B cell (primary cell): ENCODE measurements at regions of chr10 and their contacts with region 1.

Region 1: DNA sequence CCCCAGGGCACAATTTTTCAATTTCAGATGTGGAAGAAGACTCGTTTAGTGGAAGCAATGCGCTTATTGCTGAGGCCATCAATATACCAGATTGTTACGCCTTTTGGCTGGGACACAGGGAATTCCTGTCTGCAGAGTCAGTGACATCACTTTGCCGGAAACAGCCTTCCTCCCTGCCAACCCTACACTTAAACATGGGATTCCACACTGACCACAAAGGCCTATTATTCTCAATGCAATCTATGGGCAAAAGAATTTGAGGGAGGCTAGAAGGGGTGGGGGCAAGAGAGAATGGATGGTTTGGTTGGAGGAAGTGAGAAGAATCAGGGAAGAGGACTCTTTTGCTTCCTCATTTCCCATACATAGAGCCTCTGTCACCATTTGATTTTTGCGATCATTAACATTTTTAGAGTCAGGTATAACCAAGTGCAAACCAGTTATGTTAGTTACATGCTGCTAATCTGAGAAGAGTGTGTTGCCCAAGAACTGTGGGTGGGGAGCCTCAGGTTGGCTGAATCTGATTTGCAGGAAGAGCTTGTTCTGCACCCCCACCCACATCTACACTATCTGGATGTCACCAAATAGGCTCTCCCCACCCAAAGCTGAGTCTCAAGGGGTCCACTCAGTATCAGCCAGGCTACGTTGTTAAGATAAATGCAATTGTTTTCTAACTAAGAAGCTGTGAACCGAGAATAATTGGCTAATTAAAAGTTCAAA is 58.2 kb downstream of the ENTPD1 start:
- DNase-seq: no peak
- ATAC-seq: peak; percentile 45
- H3K4me3 ChIP-seq: no peak overlapping the region
- H3K4me3 Mint-ChIP-seq: peak overlapping the region; percentile 52
- H3K27ac ChIP-seq: no peak overlapping the region
- H3K27ac Mint-ChIP-seq: peak overlapping the region; percentile 28
- H3K4me1 ChIP-seq: peaks cover 27 to 46% of the 10 kb centered on the region in 2 donors
- H3K4me1 Mint-ChIP-seq: peaks cover 67% of the 10 kb centered on the region
- H3K27me3 ChIP-seq: no peaks in the 10 kb centered on the region
- H3K27me3 Mint-ChIP-seq: no peaks in the 10 kb centered on the region
- CTCF ChIP-seq: no peak

Region 2: DNA sequence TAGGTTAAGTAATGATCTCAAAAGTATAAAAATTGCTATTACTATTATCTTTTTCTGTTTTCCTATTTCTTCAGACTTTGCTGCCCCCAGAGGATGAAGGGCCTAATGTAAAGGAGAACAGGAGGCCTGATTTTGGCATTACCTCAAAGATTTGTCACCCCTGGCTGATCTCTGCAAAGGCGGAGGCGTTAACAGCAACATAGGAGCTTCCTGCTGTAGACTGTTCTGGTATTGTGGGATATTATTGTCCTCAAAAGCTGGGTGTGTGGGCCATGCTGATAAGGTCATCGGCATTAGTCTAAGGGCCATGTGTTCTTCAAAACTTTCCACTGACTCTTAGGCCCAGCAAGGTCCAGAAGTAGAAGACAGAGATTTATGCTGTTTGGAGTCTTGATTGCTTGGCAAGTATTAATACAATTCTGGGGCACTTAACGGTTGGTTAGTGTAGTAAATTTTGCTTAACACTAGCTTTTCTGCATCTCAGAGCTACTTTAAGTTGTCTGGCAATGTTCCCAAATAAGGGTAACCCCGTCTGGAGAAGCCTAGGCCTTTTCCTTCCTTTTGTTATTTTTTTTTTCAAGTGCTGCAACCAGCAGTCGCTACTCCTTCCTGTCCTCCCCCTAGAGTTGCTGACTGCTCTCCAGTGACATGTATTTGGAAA is 72.2 kb before region 1 on chr10:
- CTCF ChIA-PET with region 1: interaction called, 33 read pairs
- POLR2A ChIA-PET with region 1: no interaction called
- intact Hi-C with region 1: no loop called
- DNase-seq: peak; percentile 79
- ATAC-seq: peak; percentile 84
- H3K4me3 ChIP-seq: peak overlapping the region; percentile 7 to 63 (median 49)
- H3K4me3 Mint-ChIP-seq: peak overlapping the region; percentile 90
- H3K27ac ChIP-seq: peak overlapping the region; percentile 76 to 78
- H3K27ac Mint-ChIP-seq: peak overlapping the region; percentile 98
- H3K4me1 ChIP-seq: peaks cover 44 to 48% of the 10 kb centered on the region in 2 donors
- H3K4me1 Mint-ChIP-seq: peaks cover 55% of the 10 kb centered on the region
- H3K27me3 ChIP-seq: no peaks in the 10 kb centered on the region
- H3K27me3 Mint-ChIP-seq: no peaks in the 10 kb centered on the region
- CTCF ChIP-seq: peak; percentile 66

Region 3: GRCh38 chr10:95792874-95793285 is 21.3 kb before region 1 on chr10:
- CTCF ChIA-PET with region 1: interaction called, 4 read pairs
- POLR2A ChIA-PET with region 1: no interaction called
- intact Hi-C with region 1: loop called (anchors 2 kb)
- DNase-seq: peak; percentile 43
- ATAC-seq: no peak
- H3K4me3 ChIP-seq: peak overlapping the region in 1 of 5 experiments; percentile 21
- H3K4me3 Mint-ChIP-seq: peak overlapping the region; percentile 38
- H3K27ac ChIP-seq: peak overlapping the region; percentile 83 to 85
- H3K27ac Mint-ChIP-seq: peak overlapping the region; percentile 91
- H3K4me1 ChIP-seq: peaks cover 69 to 74% of the 10 kb centered on the region in 2 donors
- H3K4me1 Mint-ChIP-seq: peaks cover 87% of the 10 kb centered on the region
- H3K27me3 ChIP-seq: no peaks in the 10 kb centered on the region
- H3K27me3 Mint-ChIP-seq: no peaks in the 10 kb centered on the region
- CTCF ChIP-seq: no peak

Region 4: DNA sequence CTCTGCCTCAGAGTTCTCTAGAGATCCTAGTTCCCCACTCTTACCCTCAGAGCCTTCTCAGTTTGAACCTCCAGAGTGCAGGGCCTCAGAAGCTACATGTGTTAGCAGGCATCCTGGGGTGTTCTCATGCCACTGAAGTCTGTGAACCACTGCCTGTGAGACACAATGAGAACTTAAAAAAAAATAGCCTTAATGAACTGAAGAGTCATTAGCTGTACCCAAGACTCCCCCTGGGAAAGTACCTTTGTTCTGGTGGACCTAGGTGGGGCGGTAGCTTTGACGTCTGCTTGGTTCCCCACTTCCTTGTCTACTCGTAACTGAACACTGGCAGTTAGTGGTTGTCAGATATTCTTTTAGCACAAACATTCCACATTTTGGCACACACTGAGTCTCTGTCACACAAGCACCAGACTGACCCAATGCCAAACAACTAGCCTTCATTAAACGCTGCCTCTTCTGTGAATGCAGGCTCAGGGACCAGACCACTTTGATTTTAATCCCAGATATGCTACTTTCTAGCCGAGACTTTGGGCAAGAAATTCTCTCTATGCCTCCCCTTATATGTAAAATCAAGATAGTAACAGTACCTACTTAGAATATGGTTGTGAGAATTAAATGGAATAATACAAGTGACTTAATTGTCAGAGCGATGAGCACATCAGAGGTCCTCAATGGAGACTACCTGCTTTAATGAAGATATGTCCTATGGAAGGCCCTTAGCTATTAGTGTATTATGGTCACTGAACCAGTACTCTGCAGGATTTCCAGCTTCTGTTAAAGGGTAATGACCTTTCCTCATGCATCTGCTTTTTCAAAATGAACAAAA is 18.3 kb after region 1 on chr10:
- CTCF ChIA-PET with region 1: interaction called, 20 read pairs
- POLR2A ChIA-PET with region 1: interaction called, 3 read pairs
- intact Hi-C with region 1: no loop called
- DNase-seq: peak; percentile 94
- ATAC-seq: peak; percentile 89
- H3K4me3 ChIP-seq: peak overlapping the region in 3 of 5 experiments; percentile 11 to 36 (median 23)
- H3K4me3 Mint-ChIP-seq: peak overlapping the region; percentile 83
- H3K27ac ChIP-seq: peak overlapping the region; percentile 89 to 95
- H3K27ac Mint-ChIP-seq: peak overlapping the region; percentile 96
- H3K4me1 ChIP-seq: peaks cover 82 to 87% of the 10 kb centered on the region in 2 donors
- H3K4me1 Mint-ChIP-seq: peaks cover 82% of the 10 kb centered on the region
- H3K27me3 ChIP-seq: no peaks in the 10 kb centered on the region
- H3K27me3 Mint-ChIP-seq: no peaks in the 10 kb centered on the region
- CTCF ChIP-seq: no peak

Region 5: GRCh38 chr10:96017191-96017687 is 203.1 kb after region 1 on chr10:
- CTCF ChIA-PET with region 1: no interaction called
- POLR2A ChIA-PET with region 1: no interaction called
- intact Hi-C with region 1: no loop called
- DNase-seq: peak; percentile 74
- ATAC-seq: peak; percentile 61
- H3K4me3 ChIP-seq: no peak overlapping the region
- H3K4me3 Mint-ChIP-seq: no peak overlapping the region
- H3K27ac ChIP-seq: no peak overlapping the region
- H3K27ac Mint-ChIP-seq: no peak overlapping the region
- H3K4me1 ChIP-seq: peaks cover 0 to 5% of the 10 kb centered on the region in 2 donors
- H3K4me1 Mint-ChIP-seq: peaks cover 4% of the 10 kb centered on the region
- H3K27me3 ChIP-seq: no peaks in the 10 kb centered on the region
- H3K27me3 Mint-ChIP-seq: no peaks in the 10 kb centered on the region
- CTCF ChIP-seq: peak; percentile 85